ENCODE measurements at regions of chr7 and their contacts with region 1.

Region 1: DNA sequence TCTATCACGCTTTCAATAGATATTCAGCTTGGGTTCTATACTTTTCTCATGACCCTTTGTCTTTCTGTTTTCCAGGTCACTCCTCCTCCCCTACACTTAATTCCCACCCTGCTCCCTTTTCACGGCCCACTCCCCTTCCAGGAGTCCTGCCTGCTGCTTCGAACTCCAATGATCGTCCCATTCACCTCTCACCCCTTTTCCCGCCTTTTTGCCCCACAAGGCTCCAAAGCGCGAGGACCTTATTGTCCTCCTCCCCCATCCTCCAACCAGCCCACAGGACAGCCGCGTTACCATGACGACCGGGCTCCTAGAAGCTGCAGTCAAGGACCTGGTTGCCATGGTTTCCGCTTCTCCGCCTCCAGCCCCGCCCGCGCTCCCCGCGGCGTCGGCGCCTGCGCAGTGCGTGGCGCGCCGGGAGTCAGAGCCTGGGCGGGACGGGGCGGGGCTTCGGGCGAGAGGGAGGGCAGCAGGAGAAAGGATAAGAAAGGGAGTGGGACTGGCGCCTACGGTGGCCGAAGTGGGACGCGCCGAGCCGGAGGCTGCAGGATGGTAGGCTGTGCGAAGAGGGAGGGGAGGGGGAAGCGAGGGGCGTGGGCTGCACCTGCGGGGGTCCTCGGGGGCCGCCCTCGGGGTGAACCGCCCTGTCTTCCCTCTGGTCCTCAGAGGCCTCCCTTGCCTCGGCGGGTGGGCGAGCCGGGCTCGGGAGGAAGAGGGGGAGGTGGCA is at the start of gene AP1S1:
- DNase-seq: peak; percentile 96
- ATAC-seq: peak; percentile 89
- H3K4me3 ChIP-seq: peak within 1 kb of the TSS; percentile 74 to 85
- H3K27ac ChIP-seq: peak within 1 kb of the TSS; percentile 78
- H3K4me1 ChIP-seq: peaks cover 28 to 43% of the 10 kb centered on the region in 2 experiments
- H3K27me3 ChIP-seq: no peaks in the 10 kb centered on the region
- CTCF ChIP-seq: no peak
- POLR2A ChIP-seq: no peak
- RAD21 ChIP-seq: no peak
- total RNA-seq, gene AP1S1: 130 TPM

Region 2: GRCh38 chr7:101012931-101013669 is 141.0 kb before region 1 on chr7:
- CTCF ChIA-PET with region 1: no interaction called
- POLR2A ChIA-PET with region 1: no interaction called
- RAD21 ChIA-PET with region 1: no interaction called
- intact Hi-C with region 1: no loop called
- DNase-seq: no peak
- ATAC-seq: no peak
- H3K4me3 ChIP-seq: no peak overlapping the region
- H3K27ac ChIP-seq: no peak overlapping the region
- H3K4me1 ChIP-seq: peaks cover 0 to 6% of the 10 kb centered on the region in 2 experiments; a peak in 2 of 4 replicates
- H3K27me3 ChIP-seq: peaks cover 10% of the 10 kb centered on the region; the same call in 1 of the 2 replicates
- CTCF ChIP-seq: no peak
- POLR2A ChIP-seq: no peak
- RAD21 ChIP-seq: no peak

Region 3: GRCh38 chr7:101165075-101165957 is 11.2 kb after region 1 on chr7 and contains the start of gene VGF:
- CTCF ChIA-PET with region 1: interaction called, 3 read pairs
- POLR2A ChIA-PET with region 1: interaction called, 11 read pairs
- RAD21 ChIA-PET with region 1: interaction called, 3 read pairs
- intact Hi-C with region 1: no loop called
- DNase-seq: peak; percentile 83
- ATAC-seq: peak; percentile 65
- H3K4me3 ChIP-seq: peak within 1 kb of the TSS; percentile 73 to 78
- H3K27ac ChIP-seq: peak within 1 kb of the TSS; percentile 97; the same call in 1 of the 2 replicates
- H3K4me1 ChIP-seq: peaks cover 59 to 97% of the 10 kb centered on the region in 2 experiments
- H3K27me3 ChIP-seq: no peaks in the 10 kb centered on the region
- CTCF ChIP-seq: no peak
- POLR2A ChIP-seq: peak; percentile 24
- RAD21 ChIP-seq: no peak
- total RNA-seq, gene VGF: 43.2 TPM